ENCODE measurements at regions of chr12 and their contacts with region 1.

Region 1: DNA sequence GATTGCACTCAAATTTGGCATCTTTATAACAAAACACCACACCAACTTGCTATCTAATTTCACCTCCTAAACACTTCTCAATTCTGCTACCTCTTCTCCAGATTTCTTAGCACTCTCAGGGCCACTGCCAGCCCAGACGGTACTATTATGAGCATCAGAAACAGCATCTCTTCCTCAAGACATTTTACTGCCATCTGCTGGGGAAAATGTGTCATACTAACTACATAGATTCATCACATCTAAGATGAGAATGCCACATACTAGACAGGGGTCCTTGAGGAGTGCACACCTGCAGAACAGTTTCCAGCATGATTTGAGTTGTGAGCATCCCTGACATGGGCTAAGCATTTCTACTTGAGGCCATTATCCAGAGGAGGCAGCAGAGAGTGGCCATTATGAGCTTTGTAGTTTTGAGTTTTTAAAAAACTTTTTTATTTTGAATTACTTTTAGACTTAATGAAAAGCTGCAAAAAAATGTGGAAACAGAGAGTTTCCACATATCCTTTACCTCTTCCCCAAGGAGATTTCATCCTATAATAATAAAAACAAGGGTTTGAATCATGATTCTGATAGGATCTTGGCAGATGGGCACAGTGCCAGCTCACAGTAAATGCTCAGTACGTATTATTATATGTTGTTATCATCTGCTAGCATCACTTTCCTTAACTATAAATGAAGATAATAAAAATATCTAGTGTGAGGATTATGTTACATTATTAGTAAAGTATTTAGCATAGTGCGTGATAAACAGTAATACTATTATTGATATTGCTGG is 15.2 kb upstream of the GRIP1 start:
- H3K4me3 Mint-ChIP-seq: no peak overlapping the region
- H3K27ac Mint-ChIP-seq: no peak overlapping the region
- H3K4me1 Mint-ChIP-seq: peaks cover 20% of the 10 kb centered on the region
- H3K27me3 Mint-ChIP-seq: no peaks in the 10 kb centered on the region

Region 2: GRCh38 chr12:66352197-66352596 is 341.9 kb before region 1 on chr12:
- intact Hi-C with region 1: loop called (anchors 1 kb)
- H3K4me3 Mint-ChIP-seq: no peak overlapping the region
- H3K27ac Mint-ChIP-seq: no peak overlapping the region
- H3K4me1 Mint-ChIP-seq: peaks cover 6% of the 10 kb centered on the region
- H3K27me3 Mint-ChIP-seq: no peaks in the 10 kb centered on the region

Region 3: DNA sequence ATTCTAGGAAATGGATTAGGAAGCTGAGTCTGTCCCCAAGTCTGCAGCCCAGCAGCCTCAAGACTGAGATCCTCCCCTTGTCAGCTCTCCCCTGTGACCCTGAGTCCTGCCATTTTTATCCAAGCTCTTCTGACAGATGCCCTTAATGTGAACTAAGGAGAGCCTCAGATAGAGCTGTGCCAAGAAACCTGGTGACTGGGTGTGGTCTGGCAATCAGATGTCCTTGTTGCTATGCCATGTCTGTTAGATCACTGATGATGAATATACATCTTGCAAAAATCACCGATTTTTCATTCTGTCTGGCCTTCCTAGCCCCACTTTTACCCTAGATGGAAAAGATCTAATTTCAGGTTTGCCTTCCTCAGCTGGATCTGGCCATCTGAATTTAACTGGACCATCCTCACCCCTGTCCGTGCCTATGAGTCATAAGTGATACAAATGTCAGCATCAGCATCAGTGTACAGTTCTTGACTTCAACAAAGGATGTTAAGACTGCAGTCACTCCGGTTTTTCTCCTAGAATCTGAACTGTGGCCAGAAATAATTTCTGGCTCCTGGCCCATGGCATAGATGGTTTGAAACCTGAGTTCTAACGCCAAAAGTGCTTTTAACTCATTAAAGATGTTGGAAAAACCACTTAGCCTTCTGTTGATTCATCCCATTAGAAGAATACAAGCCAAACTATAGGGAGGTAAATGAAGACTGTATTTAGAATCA is 46.0 kb after region 1 on chr12:
- intact Hi-C with region 1: no loop called
- H3K4me3 Mint-ChIP-seq: no peak overlapping the region
- H3K27ac Mint-ChIP-seq: no peak overlapping the region
- H3K4me1 Mint-ChIP-seq: peaks cover 6% of the 10 kb centered on the region
- H3K27me3 Mint-ChIP-seq: no peaks in the 10 kb centered on the region

Region 4: DNA sequence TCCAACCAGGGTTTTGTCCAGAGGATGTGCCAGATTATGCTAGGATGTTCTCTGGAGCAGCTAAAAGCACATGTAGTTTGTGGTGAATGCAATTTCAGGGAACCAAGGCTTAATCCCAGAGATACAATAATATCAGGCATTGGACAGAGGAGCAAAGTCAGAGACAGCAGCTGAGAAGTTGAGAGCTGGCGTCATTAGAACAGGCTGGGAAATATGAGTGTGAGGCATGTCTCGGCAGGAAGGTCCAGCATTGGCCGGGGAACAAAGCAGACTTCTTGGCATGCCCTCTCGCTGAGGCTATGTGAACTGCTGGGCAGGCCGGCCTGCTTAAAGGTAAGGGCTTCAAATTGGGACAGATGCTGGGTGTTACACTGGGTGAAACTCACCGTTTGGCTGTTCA is 700.5 kb after region 1 on chr12:
- intact Hi-C with region 1: no loop called
- H3K4me3 Mint-ChIP-seq: no peak overlapping the region
- H3K27ac Mint-ChIP-seq: no peak overlapping the region
- H3K4me1 Mint-ChIP-seq: no peaks in the 10 kb centered on the region
- H3K27me3 Mint-ChIP-seq: no peaks in the 10 kb centered on the region